ENCODE measurements at regions of chr12 and their contacts with region 1.

Region 1: DNA sequence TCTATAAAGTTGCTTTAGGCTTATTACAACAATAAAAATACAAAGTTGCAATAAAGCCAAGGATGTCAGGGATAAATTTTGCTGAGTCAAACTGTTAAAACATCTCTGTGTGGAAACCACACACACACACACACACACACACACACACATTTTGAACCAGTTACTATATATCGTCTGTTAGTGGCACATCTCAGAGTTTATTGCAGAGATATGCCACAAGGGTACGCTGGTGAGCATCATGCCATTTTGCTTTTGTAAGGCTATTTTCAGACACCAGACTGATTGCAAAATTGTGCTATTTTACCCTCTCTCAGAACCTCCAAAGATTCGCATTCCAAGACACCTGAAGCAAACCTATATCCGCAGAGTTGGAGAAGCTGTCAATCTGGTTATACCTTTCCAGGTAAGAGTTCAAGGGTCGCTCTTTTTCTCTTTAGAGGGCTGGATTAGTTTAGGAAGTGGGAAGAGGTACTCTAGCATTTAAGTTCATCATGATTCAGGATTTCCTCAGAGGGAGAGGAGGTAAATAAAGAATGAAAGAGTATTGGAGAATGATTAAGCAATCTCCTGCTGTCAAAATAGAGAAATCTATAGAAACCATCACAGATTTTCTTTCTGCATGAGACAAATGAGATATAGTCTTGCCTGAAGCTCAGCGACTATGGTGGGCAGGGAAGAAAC is 27.3 kb upstream of the CHPT1 start:
- DNase-seq: peak in 1 of 2 donors; percentile 9
- ATAC-seq: peak in 7 of 8 donors; percentile 33 to 72 (median 54)
- H3K4me3 ChIP-seq: no peak overlapping the region
- H3K27ac ChIP-seq: no peak overlapping the region
- H3K4me1 ChIP-seq: peaks cover 0 to 18% (median 0%) of the 10 kb centered on the region in 9 donors
- H3K27me3 ChIP-seq: peaks cover 0 to 10% (median 0%) of the 10 kb centered on the region in 7 donors
- CTCF ChIP-seq: peak in 8 of 9 donors; percentile 31 to 62 (median 54)

Region 2: DNA sequence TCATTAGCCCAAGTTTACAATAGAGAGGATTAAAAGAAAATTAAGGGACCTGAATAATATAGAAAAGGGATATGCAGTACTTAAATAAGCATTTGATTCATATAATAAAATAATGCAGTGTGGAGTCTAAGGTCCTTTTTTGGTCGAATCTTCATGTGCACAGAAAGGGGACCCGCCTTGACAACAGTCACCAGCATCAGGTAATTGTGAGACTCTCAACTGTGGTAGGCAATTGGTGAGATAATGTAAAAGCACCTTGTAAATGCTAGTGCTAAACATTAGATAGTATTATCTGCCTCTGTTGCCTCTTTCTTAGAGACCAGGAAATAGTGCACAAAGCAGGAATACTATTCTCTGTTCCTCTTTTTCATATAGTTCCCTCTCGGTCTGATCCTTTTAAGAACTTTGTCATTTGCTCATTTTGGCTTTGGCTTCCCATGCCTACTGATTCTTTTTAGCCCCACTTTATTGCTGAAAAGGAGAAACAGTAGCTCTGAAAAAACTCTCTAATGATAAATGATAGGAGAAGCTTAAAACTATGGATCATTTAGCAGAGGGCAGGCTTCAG is 44.8 kb after region 1 on chr12:
- intact Hi-C with region 1: loop called in 1 of 10 experiments (anchors 5 kb)
- DNase-seq: no peak
- ATAC-seq: peak in 1 of 8 donors; percentile 34
- H3K4me3 ChIP-seq: no peak overlapping the region
- H3K27ac ChIP-seq: no peak overlapping the region
- H3K4me1 ChIP-seq: peaks cover 0 to 39% (median 30%) of the 10 kb centered on the region in 9 donors
- H3K27me3 ChIP-seq: no peaks in the 10 kb centered on the region
- CTCF ChIP-seq: no peak